CD4-positive, alpha-beta T cell (primary cell): ENCODE measurements at regions of chr17 and their contacts with region 1.

Region 1: DNA sequence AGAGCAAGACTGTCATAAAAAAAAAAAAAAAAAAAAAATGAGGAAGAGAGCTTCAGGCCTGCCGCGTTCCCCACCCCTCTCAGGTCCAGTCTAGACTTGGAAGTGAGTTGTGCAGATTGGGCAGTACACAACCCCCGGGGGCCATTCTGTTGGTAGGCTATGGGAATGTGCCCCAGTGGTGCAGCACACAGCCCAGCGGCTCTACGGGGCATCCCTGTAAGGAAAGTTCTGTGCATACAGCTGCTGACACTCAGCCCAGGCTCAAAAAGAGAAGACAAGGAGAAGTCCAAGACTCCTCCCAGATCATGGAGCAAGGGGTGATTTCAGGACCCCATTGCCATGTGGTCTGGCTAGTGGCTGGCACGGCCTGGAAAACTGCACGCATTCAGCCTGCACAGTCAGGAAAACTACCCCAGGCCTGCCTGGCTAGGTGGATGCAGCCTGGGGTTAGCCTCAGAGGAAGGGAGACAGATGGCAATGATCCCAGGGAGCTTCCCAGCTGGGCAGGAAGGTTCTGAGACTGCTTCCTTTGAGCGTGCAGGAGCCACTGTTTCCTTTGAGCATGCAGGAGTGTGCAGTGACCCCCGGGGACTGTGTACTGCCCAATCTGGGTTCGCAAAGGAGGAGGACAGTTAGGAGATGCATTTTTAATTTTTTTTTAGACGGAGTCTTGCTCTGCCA is 44.8 kb downstream of the PECAM1 start:
- DNase-seq: no peak
- ATAC-seq: no peak
- H3K4me3 ChIP-seq: no peak overlapping the region
- H3K4me3 Mint-ChIP-seq: no peak overlapping the region
- H3K27ac ChIP-seq: no peak overlapping the region
- H3K27ac Mint-ChIP-seq: peak overlapping the region; percentile 49
- H3K4me1 ChIP-seq: peaks cover 63% of the 10 kb centered on the region
- H3K4me1 Mint-ChIP-seq: peaks cover 48% of the 10 kb centered on the region
- H3K27me3 ChIP-seq: no peaks in the 10 kb centered on the region
- H3K27me3 Mint-ChIP-seq: no peaks in the 10 kb centered on the region
- CTCF ChIP-seq: no peak

Region 2: DNA sequence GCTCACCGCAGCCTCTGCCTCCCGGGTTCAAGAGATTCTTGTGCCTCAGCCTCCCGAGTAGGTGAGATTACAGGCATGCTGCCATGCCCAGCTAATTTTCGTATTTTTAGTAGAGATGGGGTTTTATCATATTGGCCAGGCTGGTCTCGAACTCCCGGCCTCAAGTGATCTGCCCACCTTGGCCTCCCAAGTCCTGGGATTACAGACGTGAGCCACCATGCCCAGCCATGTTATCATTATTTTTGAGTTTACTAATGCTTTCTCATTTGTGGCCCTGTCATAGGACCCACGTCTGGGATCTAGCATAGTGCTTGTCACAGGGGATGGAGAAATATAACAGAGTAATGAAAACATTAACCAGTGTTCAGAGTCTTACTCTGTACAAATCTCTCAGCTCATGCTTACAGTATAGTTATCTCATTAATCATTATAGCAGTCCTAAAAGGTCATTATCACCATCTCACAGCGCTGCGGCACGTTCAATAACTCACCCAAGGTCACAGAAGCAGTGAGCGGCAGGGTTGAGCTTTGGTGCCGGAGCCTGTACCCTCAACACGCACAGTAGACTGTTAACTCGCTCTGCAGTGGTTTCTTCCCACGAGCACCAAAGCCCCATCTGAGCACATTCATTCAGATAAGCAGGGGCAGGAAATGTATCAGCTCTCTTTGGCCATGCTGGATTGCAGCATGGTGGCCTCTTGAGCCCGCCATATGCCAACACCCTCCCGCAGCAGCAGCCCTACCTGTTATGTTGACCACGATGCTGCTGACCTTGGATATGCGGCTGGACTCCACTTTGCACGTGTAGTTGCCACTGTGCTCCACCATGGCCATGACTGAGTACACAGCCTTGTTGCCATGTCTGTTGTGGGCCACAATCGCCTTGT is 23.4 kb after region 1 on chr17:
- CTCF ChIA-PET with region 1: no interaction called
- POLR2A ChIA-PET with region 1: no interaction called
- intact Hi-C with region 1: no loop called
- DNase-seq: no peak
- ATAC-seq: no peak
- H3K4me3 ChIP-seq: no peak overlapping the region
- H3K4me3 Mint-ChIP-seq: no peak overlapping the region
- H3K27ac ChIP-seq: no peak overlapping the region
- H3K27ac Mint-ChIP-seq: no peak overlapping the region
- H3K4me1 ChIP-seq: no peaks in the 10 kb centered on the region
- H3K4me1 Mint-ChIP-seq: no peaks in the 10 kb centered on the region
- H3K27me3 ChIP-seq: no peaks in the 10 kb centered on the region
- H3K27me3 Mint-ChIP-seq: no peaks in the 10 kb centered on the region
- CTCF ChIP-seq: no peak

Region 3: GRCh38 chr17:64385187-64386083 is 39.6 kb after region 1 on chr17:
- CTCF ChIA-PET with region 1: no interaction called
- POLR2A ChIA-PET with region 1: interaction called, 5 read pairs
- intact Hi-C with region 1: loop called in 1 of 2 experiments (anchors 5 kb)
- DNase-seq: peak in 4 of 14 experiments; percentile 33 to 58 (median 52)
- ATAC-seq: no peak
- H3K4me3 ChIP-seq: no peak overlapping the region
- H3K4me3 Mint-ChIP-seq: no peak overlapping the region
- H3K27ac ChIP-seq: no peak overlapping the region
- H3K27ac Mint-ChIP-seq: peak overlapping the region; percentile 24
- H3K4me1 ChIP-seq: peaks cover 26% of the 10 kb centered on the region
- H3K4me1 Mint-ChIP-seq: peaks cover 44% of the 10 kb centered on the region
- H3K27me3 ChIP-seq: no peaks in the 10 kb centered on the region
- H3K27me3 Mint-ChIP-seq: no peaks in the 10 kb centered on the region
- CTCF ChIP-seq: no peak

Region 4: GRCh38 chr17:64393000-64393402 is 47.2 kb after region 1 on chr17:
- CTCF ChIA-PET with region 1: no interaction called
- POLR2A ChIA-PET with region 1: interaction called, 13 read pairs
- intact Hi-C with region 1: loop called (anchors 5 kb)
- DNase-seq: peak in 7 of 14 experiments; percentile 20 to 51 (median 43)
- ATAC-seq: peak; percentile 73
- H3K4me3 ChIP-seq: peak overlapping the region; percentile 36
- H3K4me3 Mint-ChIP-seq: peak overlapping the region; percentile 72
- H3K27ac ChIP-seq: peak overlapping the region in 1 of 2 donors; percentile 38
- H3K27ac Mint-ChIP-seq: peak overlapping the region; percentile 91
- H3K4me1 ChIP-seq: peaks cover 35% of the 10 kb centered on the region
- H3K4me1 Mint-ChIP-seq: peaks cover 63% of the 10 kb centered on the region
- H3K27me3 ChIP-seq: no peaks in the 10 kb centered on the region
- H3K27me3 Mint-ChIP-seq: no peaks in the 10 kb centered on the region
- CTCF ChIP-seq: no peak

Region 5: DNA sequence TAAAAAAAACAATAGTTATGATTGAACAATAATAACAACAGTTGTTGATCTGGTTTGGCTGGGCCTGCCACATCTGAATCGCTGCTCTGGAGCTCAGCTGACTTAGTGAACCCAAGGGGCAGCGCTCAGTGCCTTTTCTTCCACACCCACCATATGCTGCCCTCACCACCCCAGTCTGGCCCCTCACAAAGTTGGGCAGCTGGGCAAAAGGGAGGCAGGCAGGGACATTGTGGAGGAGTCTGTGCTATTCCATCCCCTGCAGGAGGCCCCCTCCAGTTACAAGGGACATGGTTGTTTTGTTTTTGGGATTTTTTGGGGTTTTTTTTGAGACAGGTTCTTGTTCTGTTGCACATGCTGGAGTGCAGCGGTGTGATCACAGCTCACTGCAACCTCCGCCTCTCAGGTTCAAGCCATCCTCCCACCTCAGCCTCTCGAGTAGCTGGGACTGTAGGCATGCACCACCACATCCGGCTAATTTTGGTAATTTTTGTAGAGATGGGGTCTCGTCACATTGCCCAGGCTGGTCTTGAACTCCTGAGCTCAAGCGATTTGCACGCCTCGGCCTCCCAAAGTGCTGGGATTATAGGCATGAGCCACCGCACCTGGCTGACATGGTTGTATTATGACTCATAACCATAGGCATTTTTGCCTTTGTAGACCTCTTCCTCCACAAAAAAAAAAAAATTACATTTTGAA is 53.4 kb after region 1 on chr17:
- CTCF ChIA-PET with region 1: no interaction called
- POLR2A ChIA-PET with region 1: interaction called, 13 read pairs
- intact Hi-C with region 1: loop called in 1 of 2 experiments (anchors 5 kb)
- DNase-seq: no peak
- ATAC-seq: no peak
- H3K4me3 ChIP-seq: no peak overlapping the region
- H3K4me3 Mint-ChIP-seq: no peak overlapping the region
- H3K27ac ChIP-seq: no peak overlapping the region
- H3K27ac Mint-ChIP-seq: no peak overlapping the region
- H3K4me1 ChIP-seq: peaks cover 20% of the 10 kb centered on the region
- H3K4me1 Mint-ChIP-seq: peaks cover 41% of the 10 kb centered on the region
- H3K27me3 ChIP-seq: no peaks in the 10 kb centered on the region
- H3K27me3 Mint-ChIP-seq: no peaks in the 10 kb centered on the region
- CTCF ChIP-seq: no peak